Posterior vena cava (tissue), 2 donors: ENCODE measurements at regions of chr4 and their contacts with region 1.

Region 1: DNA sequence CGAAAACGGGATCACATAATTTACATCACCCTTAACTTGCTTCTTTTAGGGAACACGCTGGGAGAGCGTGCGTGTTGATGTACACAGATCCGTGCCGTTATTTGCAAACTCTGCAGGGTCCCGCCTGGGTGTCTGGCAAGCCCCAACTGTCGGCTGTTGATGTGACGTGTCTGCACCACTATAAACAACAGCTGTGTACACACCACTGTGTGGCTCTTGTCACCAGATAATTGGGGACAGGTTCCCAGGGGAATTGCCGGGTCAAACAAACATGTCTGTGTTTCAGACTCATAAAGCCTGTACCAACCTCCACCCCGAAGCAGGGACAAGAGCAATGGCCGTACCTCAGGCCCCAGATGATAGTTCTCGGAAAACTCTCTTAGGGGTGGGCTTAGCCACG is 105.0 kb upstream of the AFAP1 start:
- DNase-seq: no peak

Region 2: GRCh38 chr4:8586671-8587455 is 542.2 kb after region 1 on chr4:
- intact Hi-C with region 1: loop called in 1 of 2 experiments (anchors 5 kb)
- DNase-seq: peak; percentile 73